GM10248 (cell line): ENCODE measurements at regions of chr6 and their contacts with region 1.

Region 1: DNA sequence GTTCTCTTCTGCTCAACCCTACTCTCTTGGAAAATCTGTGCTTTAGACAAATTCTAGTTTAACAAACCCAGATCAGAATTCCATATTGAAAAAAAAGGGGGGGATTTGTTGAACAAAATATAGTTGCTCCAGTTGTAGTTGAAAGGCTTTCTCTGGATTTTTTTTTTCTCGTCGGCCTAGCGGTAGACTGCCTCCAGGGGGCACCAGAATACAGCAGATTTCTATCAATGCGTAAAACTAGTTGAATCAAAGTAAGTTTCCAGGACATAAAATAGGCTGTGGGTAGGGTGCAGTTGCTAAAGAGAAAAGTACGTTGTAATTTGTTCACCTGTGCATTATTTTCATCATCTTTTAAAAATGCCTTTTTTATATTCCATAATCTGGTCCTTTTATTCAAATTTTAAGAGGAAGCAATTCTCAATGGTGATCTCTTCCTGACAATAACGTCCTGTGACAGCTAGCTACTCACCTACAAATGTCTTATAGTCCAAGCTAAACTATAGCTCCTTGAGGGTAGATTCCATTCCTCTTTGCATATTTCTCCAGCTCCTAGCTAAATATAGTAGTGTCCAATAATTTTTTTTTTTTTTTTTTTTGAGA is 105.4 kb downstream of the PERP start:
- DNase-seq: peak; percentile 40
- CTCF ChIP-seq: peak; percentile 95

Region 2: GRCh38 chr6:136901212-136901784 is 1100.6 kb before region 1 on chr6:
- CTCF ChIA-PET with region 1: no interaction called
- POLR2A ChIA-PET with region 1: no interaction called
- DNase-seq: no peak
- CTCF ChIP-seq: no peak

Region 3: DNA sequence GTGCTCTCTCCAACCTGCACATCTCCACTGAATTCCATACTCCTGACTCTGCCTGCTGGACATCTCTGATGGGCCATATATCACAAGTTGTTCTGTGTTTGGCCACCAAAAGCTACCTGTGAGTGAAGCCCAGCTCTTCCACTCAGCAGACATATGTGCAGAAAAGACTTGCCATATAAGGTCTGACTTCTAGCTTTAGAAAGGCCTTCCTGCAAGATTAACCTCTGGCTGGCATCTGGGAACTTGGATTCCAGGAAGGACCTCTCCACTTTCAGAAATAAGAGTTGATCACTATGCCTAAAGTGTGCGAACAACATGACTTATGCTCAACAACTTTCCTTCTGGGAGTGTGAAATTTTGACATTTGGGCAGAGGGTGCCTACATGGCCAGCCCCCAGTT is 21.1 kb before region 1 on chr6:
- CTCF ChIA-PET with region 1: interaction called, 13 read pairs
- POLR2A ChIA-PET with region 1: no interaction called
- DNase-seq: no peak
- CTCF ChIP-seq: no peak

Region 4: GRCh38 chr6:137989664-137990063 is 12.2 kb before region 1 on chr6:
- CTCF ChIA-PET with region 1: interaction called, 28 read pairs
- POLR2A ChIA-PET with region 1: no interaction called
- DNase-seq: no peak
- CTCF ChIP-seq: no peak

Region 5: DNA sequence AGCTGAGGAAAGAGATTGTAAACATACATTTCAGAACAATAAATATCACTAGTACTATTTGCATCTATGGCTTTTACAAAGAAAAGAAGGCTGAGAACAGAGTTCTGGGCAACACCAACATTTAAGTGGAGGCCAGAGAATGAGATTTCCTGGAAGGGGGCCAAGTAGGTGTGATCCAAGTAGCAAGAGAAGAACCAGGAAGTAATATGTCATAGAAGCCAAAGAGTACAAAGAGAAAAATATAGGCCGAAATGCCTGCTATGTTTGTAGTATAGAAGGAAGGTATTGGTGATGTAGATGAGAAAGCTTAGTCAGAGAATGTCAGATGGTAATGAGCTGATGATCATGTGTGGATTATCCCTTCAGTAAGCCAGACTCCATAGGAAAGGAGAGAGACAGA is 10.8 kb after region 1 on chr6:
- CTCF ChIA-PET with region 1: interaction called, 24 read pairs
- POLR2A ChIA-PET with region 1: no interaction called
- DNase-seq: no peak
- CTCF ChIP-seq: no peak

Region 6: GRCh38 chr6:138109042-138109997 is 107.5 kb after region 1 on chr6:
- CTCF ChIA-PET with region 1: interaction called, 33 read pairs
- POLR2A ChIA-PET with region 1: no interaction called
- DNase-seq: peak; percentile 52
- CTCF ChIP-seq: peak; percentile 84